ENCODE measurements at regions of chr6 and their contacts with region 1.

Region 1: GRCh38 chr6:158270389-158271127 is 41.7 kb upstream of the TULP4 start:
- DNase-seq: no peak
- ATAC-seq: no peak
- H3K4me3 ChIP-seq: no peak overlapping the region
- H3K4me3 Mint-ChIP-seq: peak overlapping the region in 8 of 10 donors; percentile 4 to 66 (median 58)
- H3K27ac ChIP-seq: no peak overlapping the region
- H3K27ac Mint-ChIP-seq: peak overlapping the region; percentile 22 to 87 (median 58)
- H3K4me1 ChIP-seq: peaks cover 16 to 18% of the 10 kb centered on the region in 2 donors
- H3K4me1 Mint-ChIP-seq: peaks cover 12 to 36% (median 33%) of the 10 kb centered on the region in 7 donors
- H3K27me3 ChIP-seq: no peaks in the 10 kb centered on the region
- H3K27me3 Mint-ChIP-seq: no peaks in the 10 kb centered on the region

Region 2: GRCh38 chr6:158072083-158072721 is 198.4 kb before region 1 on chr6:
- CTCF ChIA-PET with region 1: no interaction called
- POLR2A ChIA-PET with region 1: no interaction called
- intact Hi-C with region 1: no loop called
- DNase-seq: peak; percentile 28 to 69 (median 65)
- ATAC-seq: peak; percentile 85
- H3K4me3 ChIP-seq: no peak overlapping the region
- H3K4me3 Mint-ChIP-seq: no peak overlapping the region
- H3K27ac ChIP-seq: no peak overlapping the region
- H3K27ac Mint-ChIP-seq: peak overlapping the region; percentile 32 to 91 (median 55)
- H3K4me1 ChIP-seq: peaks cover 0 to 5% of the 10 kb centered on the region in 2 donors
- H3K4me1 Mint-ChIP-seq: peaks cover 5 to 31% (median 6%) of the 10 kb centered on the region in 7 donors
- H3K27me3 ChIP-seq: no peaks in the 10 kb centered on the region
- H3K27me3 Mint-ChIP-seq: no peaks in the 10 kb centered on the region

Region 3: GRCh38 chr6:158103228-158103627 is 167.3 kb before region 1 on chr6:
- CTCF ChIA-PET with region 1: no interaction called
- POLR2A ChIA-PET with region 1: no interaction called
- intact Hi-C with region 1: no loop called
- DNase-seq: no peak
- ATAC-seq: no peak
- H3K4me3 ChIP-seq: no peak overlapping the region
- H3K4me3 Mint-ChIP-seq: no peak overlapping the region
- H3K27ac ChIP-seq: no peak overlapping the region
- H3K27ac Mint-ChIP-seq: no peak overlapping the region
- H3K4me1 ChIP-seq: no peaks in the 10 kb centered on the region
- H3K4me1 Mint-ChIP-seq: peaks cover 0 to 3% (median 0%) of the 10 kb centered on the region in 7 donors
- H3K27me3 ChIP-seq: no peaks in the 10 kb centered on the region
- H3K27me3 Mint-ChIP-seq: no peaks in the 10 kb centered on the region

Region 4: DNA sequence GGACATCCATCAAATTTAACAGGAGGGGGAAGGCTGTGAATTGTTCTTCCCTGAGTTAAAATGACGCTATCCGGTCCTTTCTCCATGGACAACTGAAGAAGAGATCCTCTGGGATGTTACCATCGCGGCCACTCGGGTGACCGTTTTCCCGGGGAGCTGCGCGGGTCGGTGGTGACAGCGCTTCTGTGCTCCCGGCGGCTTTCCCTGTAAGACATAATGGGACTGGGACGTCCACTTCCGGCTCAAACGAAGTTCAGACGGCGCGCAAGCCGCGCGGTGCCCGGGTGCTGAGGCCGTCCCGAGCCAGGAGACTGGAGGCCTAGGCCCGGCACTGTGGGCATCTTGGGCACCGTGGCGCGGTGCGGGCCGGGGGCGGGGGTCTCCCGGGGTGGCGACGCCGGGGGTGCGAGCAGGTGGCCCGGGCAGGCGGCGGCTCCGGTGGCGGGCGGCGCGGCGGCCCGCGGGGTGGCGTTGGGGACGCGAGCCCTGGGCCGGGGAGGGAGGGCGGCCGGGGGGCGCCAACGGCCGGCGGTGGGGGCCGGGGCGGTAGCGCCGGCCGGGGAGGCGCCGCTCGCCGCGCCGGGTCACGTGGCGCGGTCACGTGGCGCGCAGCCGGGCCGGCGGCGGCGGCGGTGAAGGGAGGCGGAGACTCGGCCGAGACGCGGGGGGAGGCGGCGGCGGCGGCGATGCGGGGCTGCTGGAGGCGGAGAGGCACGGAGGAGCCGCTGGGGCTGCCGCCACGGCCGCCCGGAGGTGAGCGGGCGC is 38.8 kb before region 1 on chr6:
- CTCF ChIA-PET with region 1: no interaction called
- POLR2A ChIA-PET with region 1: no interaction called
- intact Hi-C with region 1: loop called (anchors 1 to 2 kb)
- DNase-seq: peak; percentile 57 to 84 (median 71)
- ATAC-seq: peak; percentile 86
- H3K4me3 ChIP-seq: peak overlapping the region; percentile 62
- H3K4me3 Mint-ChIP-seq: peak overlapping the region; percentile 85 to 96 (median 92)
- H3K27ac ChIP-seq: peak overlapping the region; percentile 77
- H3K27ac Mint-ChIP-seq: peak overlapping the region; percentile 86 to 94 (median 89)
- H3K4me1 ChIP-seq: peaks cover 6 to 18% of the 10 kb centered on the region in 2 donors
- H3K4me1 Mint-ChIP-seq: peaks cover 22 to 44% (median 38%) of the 10 kb centered on the region in 7 donors
- H3K27me3 ChIP-seq: no peaks in the 10 kb centered on the region
- H3K27me3 Mint-ChIP-seq: peaks cover 0 to 14% (median 0%) of the 10 kb centered on the region in 5 donors

Region 5: GRCh38 chr6:158377860-158378259 is 107.3 kb after region 1 on chr6:
- CTCF ChIA-PET with region 1: no interaction called
- POLR2A ChIA-PET with region 1: no interaction called
- intact Hi-C with region 1: no loop called
- DNase-seq: no peak
- ATAC-seq: no peak
- H3K4me3 ChIP-seq: no peak overlapping the region
- H3K4me3 Mint-ChIP-seq: no peak overlapping the region
- H3K27ac ChIP-seq: no peak overlapping the region
- H3K27ac Mint-ChIP-seq: no peak overlapping the region
- H3K4me1 ChIP-seq: no peaks in the 10 kb centered on the region
- H3K4me1 Mint-ChIP-seq: peaks cover 0 to 33% (median 26%) of the 10 kb centered on the region in 7 donors
- H3K27me3 ChIP-seq: no peaks in the 10 kb centered on the region
- H3K27me3 Mint-ChIP-seq: no peaks in the 10 kb centered on the region